ENCODE measurements at regions of chr13 and their contacts with region 1.

Region 1: GRCh38 chr13:40682449-40683240 is 16.2 kb upstream of the FOXO1 start:
- DNase-seq: no peak
- CTCF ChIP-seq: peak; percentile 47

Region 2: GRCh38 chr13:39942552-39943273 is 739.9 kb before region 1 on chr13:
- CTCF ChIA-PET with region 1: interaction called, 36 read pairs
- POLR2A ChIA-PET with region 1: no interaction called
- DNase-seq: peak; percentile 77
- CTCF ChIP-seq: peak; percentile 100

Region 3: DNA sequence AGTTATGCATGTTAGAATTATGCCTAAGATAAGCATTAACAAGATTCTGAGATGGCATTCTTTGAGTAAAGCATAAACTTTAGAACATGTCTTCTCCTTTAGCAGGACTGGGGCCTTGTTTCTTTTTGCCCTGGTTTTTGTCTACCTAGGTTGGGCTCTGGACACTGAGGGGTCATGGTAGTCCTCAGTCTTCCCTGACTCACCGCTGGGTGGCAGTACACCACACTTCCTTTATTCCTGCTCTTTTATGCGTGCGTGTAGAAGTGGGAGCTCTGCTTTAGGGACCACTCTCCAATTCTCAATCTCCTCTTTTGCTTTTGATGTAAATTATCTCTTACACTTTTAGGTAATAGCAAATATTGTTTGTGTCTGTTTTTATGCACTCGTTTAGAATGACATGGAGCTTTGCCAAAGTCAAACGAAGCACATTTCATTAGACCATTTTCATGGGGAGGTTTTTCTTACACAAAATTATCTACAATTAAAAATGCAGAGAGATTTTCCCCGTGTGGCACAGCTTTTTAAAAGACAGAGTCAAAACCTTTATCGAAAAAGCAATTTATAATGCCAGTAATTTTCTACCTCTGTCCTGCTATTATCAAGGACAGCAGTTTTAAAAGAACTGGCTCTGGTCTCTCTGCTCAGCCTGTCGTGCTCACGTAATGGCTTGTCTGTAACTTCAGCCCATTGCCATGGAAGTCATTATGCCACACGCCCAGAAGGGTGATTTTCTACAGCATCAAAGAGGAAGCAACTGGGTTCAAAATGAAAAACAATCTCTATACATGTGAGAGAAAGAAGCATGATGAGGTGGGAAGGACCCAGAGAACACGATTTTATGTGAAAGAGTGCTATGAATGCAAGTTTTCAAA is 613.2 kb before region 1 on chr13:
- CTCF ChIA-PET with region 1: interaction called, 89 read pairs
- POLR2A ChIA-PET with region 1: no interaction called
- DNase-seq: peak; percentile 59
- CTCF ChIP-seq: peak; percentile 77

Region 4: DNA sequence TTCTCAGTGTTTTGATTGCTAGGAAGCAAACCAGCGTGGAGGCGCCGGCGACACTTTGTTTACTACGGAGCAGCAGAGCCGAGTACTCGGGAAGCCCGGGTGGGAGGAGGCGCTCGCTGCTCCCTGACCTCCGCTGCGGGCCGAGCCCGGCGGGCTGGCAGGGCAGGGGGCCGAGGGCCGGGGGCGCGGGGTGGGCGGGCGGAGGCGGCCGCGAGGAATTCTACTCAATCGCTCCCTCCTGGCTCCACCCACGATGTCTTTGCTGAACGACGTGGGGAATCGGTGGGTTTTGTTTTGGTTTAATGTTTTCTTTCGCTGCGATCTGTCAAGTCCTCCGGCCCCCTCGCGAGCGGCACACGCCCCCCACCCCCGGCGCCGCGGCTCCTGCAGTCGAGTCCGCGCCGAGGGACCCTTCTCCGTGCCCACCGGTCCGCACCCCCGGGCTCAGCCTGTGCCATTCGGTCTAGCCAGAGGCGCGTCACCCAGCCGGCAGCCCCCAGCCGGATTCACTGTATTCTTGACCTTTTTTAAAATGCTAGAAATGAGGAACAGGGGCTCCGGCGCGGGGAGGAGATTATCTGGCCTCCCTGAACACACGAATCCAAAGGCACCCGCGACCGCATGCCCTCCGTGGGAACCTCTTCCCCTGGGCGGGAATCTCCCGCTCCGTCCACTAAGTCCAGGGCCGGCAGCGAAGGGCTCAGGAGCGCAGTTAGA is 15.6 kb before region 1 on chr13:
- CTCF ChIA-PET with region 1: interaction called, 48 read pairs
- POLR2A ChIA-PET with region 1: no interaction called
- DNase-seq: peak; percentile 36
- CTCF ChIP-seq: no peak

Region 5: DNA sequence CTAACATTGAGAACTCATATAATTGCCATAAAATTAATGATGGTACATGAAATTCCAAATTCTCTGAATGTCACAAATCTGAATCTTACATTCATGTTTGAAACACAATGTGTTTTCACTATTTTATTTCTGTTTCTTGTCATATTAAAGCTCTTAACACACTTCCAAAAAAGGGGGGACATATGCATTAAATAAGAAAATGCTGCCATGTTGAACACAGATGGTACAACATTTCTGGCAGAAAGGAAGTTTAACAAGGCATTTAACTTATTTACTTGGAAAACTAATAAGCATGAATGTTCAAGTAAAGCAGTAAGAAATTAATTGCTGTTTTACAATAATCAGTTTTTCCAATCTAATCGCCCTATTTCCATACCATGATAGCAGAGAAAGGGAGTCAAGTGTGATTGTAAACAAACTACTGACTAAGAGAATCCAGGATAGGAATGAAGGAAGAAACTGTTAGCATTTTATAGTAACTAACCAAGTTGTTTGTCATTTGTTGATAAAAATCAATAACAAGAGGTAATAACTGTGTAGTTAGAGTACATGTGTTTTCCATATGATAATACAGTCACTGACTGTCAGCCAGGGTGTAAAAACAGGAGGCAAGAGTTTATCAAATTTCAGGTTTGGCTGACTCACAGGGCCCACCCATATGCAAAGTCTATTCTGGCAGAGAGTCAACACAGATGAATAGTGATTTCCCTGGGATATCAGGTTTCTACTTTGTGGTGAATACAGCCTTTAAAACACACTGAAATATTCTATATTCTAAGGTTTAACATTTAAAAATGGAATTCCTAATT is 10.5 kb before region 1 on chr13:
- CTCF ChIA-PET with region 1: interaction called, 48 read pairs
- POLR2A ChIA-PET with region 1: no interaction called
- DNase-seq: no peak
- CTCF ChIP-seq: no peak

Region 6: DNA sequence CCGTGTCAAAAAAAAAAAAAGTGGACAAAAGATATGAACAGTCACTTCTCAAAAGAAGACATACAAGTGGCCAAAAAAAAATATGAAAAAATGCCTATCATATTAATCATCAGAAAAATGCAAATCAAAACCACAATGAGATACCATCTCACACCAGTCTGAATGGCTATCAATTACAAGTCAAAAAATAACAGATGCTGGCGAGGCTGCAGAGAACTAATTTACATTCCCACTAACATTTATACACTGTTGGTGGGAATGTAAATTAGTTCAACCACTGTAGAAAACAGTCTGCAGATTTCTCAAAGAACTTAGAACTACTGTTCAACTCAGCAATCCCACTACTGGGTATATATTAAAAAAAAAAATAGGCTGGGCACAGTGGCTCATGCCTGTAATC is 10.3 kb after region 1 on chr13:
- CTCF ChIA-PET with region 1: interaction called, 12 read pairs
- POLR2A ChIA-PET with region 1: no interaction called
- DNase-seq: no peak
- CTCF ChIP-seq: no peak